Motor neuron (in vitro differentiated cells): ENCODE measurements at regions of chr4 and their contacts with region 1.

Region 1: DNA sequence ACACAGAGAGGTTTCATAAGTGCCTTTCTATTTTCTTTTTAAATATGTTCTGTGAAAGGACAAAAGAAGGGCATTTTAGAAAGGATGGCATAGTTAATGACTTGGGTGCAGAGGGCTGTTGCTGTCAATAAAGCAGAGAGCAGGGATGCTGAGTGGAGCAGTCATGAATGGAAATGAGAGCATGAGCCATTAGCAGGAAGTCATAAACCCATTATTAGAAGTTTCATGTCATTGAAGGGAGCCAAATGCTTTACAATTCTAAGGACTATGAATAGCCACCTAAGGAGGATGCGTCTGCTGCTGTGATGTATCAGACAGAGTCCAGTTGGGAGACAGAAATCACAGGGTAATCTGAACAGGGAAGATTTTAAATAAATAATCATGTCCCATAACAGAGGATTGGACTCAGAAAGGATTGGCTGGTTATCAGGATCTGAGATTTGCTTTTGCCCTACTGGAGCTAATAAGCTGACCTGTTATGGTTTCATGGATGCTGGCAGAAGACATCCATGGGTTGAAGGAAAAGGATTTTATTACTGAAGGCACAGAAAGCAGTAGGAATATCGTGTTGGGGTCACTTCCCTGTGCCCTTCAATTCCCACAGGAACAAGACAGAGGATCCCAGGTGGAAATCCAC is 47.5 kb upstream of the WDR19 start:
- ATAC-seq: peak in 7 of 8 experiments; percentile 16 to 82 (median 70)
- H3K4me3 ChIP-seq: peak overlapping the region in 3 of 5 donors; percentile 11 to 20 (median 19)
- H3K27ac ChIP-seq: peak overlapping the region; percentile 87
- H3K4me1 ChIP-seq: peaks cover 14 to 15% of the 10 kb centered on the region in 2 donors

Region 2: GRCh38 chr4:38902695-38903094 is 232.1 kb before region 1 on chr4:
- in situ Hi-C with region 1: loop called in 5 of 9 experiments (anchors 10 to 25 kb)
- ATAC-seq: peak; percentile 46 to 88 (median 70)
- H3K4me3 ChIP-seq: no peak overlapping the region
- H3K27ac ChIP-seq: no peak overlapping the region
- H3K4me1 ChIP-seq: peaks cover 11 to 23% of the 10 kb centered on the region in 2 donors

Region 3: DNA sequence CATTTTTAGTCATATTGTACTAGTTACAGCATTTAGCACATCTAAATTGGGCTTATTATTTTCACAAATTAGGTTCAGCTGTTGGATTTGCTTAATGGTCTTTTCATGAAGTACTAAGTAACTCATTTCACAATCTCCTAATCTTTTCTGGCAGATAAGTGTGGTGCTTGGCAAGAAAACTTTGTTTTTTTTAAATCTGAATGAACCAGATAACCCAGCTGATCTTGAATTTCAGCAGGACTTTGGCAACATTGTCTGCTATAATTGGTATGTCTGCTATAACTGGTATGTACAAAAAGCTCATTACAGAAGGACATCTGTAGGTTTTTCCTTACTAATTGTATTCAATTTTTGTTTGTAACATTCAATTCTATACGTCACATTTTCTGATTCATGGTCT is 70.2 kb after region 1 on chr4:
- in situ Hi-C with region 1: no loop called
- ATAC-seq: no peak
- H3K4me3 ChIP-seq: no peak overlapping the region
- H3K27ac ChIP-seq: no peak overlapping the region
- H3K4me1 ChIP-seq: no peaks in the 10 kb centered on the region